GM12878 (cell line): ENCODE measurements at regions of chr20 and their contacts with region 1.

Region 1: GRCh38 chr20:50929299-50930138 is 1.7 kb downstream of the ADNP start:
- DNase-seq: peak; percentile 88
- ATAC-seq: peak; percentile 83
- H3K4me3 ChIP-seq: peak overlapping the region; percentile 94
- H3K27ac ChIP-seq: peak overlapping the region; percentile 70
- H3K4me1 ChIP-seq: peaks cover 5% of the 10 kb centered on the region; the same call in 1 of the 2 replicates
- H3K27me3 ChIP-seq: no peaks in the 10 kb centered on the region
- CTCF ChIP-seq: peak; percentile 98 to 100 (median 100); a peak in 5 of 6 replicates
- EP300 ChIP-seq: peak; percentile 15 to 74; a peak in 1 of 4 replicates
- POLR2A ChIP-seq: peak; percentile 64
- RAD21 ChIP-seq: peak; percentile 86

Region 2: GRCh38 chr20:50772420-50773185 is 156.9 kb before region 1 on chr20:
- CTCF ChIA-PET with region 1: no interaction called
- POLR2A ChIA-PET with region 1: no interaction called
- RAD21 ChIA-PET with region 1: no interaction called
- SMC1A ChIA-PET with region 1: no interaction called
- in situ Hi-C with region 1: no loop called
- intact Hi-C with region 1: no loop called
- DNase-seq: no peak
- ATAC-seq: no peak
- H3K4me3 ChIP-seq: no peak overlapping the region
- H3K27ac ChIP-seq: no peak overlapping the region
- H3K4me1 ChIP-seq: no peaks in the 10 kb centered on the region
- H3K27me3 ChIP-seq: no peaks in the 10 kb centered on the region
- CTCF ChIP-seq: no peak
- EP300 ChIP-seq: no peak
- POLR2A ChIP-seq: no peak
- RAD21 ChIP-seq: no peak

Region 3: DNA sequence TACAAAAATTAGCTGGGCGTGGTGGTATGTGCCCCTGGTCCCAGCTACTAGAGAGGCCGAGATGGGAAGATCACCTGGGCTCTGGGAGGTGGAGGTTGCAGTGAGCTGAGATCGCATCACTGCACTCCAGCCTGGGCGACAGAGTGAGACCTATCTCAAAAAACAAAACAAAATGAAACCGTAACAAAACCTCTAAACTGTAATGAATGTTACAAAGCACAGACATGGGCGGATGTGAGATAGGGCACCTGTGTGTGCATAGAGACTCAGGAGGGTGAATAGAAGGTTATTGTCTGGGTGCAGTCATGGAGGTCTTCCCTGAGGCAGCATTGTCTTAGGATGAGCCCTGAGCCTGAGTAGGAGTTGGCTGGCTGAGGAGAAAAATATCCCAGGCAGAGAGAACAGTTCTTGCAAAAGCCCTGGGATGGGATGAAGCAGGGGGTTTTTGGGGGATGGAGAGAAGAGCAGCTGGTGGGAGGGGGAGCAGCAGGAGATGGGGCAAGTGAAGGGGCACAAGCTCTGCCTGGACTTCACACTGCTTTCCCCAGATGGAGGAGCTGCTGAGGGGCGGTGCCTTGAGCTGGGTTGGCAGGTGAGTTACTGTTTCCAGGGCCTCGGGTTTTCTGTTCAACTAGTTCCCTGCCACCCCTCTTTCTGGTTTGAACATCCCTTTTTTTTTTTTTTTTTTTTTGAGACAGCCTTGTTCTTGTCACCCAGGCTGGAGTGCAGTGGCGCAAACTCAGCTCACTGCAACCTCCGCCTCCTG is 129.4 kb before region 1 on chr20:
- CTCF ChIA-PET with region 1: interaction called, 336 read pairs
- POLR2A ChIA-PET with region 1: interaction called, 67 read pairs
- RAD21 ChIA-PET with region 1: interaction called, 125 read pairs
- SMC1A ChIA-PET with region 1: interaction called, 90 read pairs
- in situ Hi-C with region 1: no loop called
- intact Hi-C with region 1: no loop called
- DNase-seq: no peak
- ATAC-seq: peak; percentile 64
- H3K4me3 ChIP-seq: peak overlapping the region; percentile 63
- H3K27ac ChIP-seq: peak overlapping the region; percentile 95
- H3K4me1 ChIP-seq: peaks cover 29% of the 10 kb centered on the region
- H3K27me3 ChIP-seq: no peaks in the 10 kb centered on the region
- CTCF ChIP-seq: no peak
- EP300 ChIP-seq: no peak
- POLR2A ChIP-seq: no peak
- RAD21 ChIP-seq: no peak

Region 4: GRCh38 chr20:50824193-50824632 is 105.3 kb before region 1 on chr20:
- CTCF ChIA-PET with region 1: interaction called, 78 read pairs
- POLR2A ChIA-PET with region 1: interaction called, 17 read pairs
- RAD21 ChIA-PET with region 1: interaction called, 33 read pairs
- SMC1A ChIA-PET with region 1: interaction called, 20 read pairs
- in situ Hi-C with region 1: no loop called
- intact Hi-C with region 1: no loop called
- DNase-seq: no peak
- ATAC-seq: no peak
- H3K4me3 ChIP-seq: no peak overlapping the region
- H3K27ac ChIP-seq: no peak overlapping the region
- H3K4me1 ChIP-seq: peaks cover 35% of the 10 kb centered on the region
- H3K27me3 ChIP-seq: no peaks in the 10 kb centered on the region
- CTCF ChIP-seq: no peak
- EP300 ChIP-seq: no peak
- POLR2A ChIP-seq: no peak
- RAD21 ChIP-seq: no peak

Region 5: DNA sequence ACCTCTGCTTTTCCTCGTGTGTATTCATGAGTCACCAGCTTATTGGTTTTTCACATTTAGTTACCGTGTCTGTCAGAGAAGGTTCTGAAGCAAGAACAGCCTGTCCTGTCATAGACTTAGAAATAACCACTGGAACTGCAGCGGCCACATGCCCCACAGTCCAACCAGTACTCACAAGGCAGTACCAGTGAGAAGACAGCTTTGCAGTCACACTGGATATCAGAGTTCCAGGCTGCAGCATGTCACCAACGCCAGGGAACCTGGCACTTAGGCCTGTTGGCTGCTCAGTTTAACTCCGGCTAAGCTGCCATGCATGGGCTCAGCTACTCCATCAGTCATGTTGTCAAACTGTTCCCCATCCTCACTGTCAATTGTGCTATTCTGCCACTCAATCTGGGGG is 38.4 kb before region 1 on chr20:
- CTCF ChIA-PET with region 1: interaction called, 20 read pairs
- POLR2A ChIA-PET with region 1: interaction called, 3 read pairs
- RAD21 ChIA-PET with region 1: interaction called, 5 read pairs
- SMC1A ChIA-PET with region 1: interaction called, 6 read pairs
- in situ Hi-C with region 1: no loop called
- intact Hi-C with region 1: no loop called
- DNase-seq: no peak
- ATAC-seq: no peak; the same call in 2 of the 3 replicates
- H3K4me3 ChIP-seq: no peak overlapping the region
- H3K27ac ChIP-seq: no peak overlapping the region
- H3K4me1 ChIP-seq: no peaks in the 10 kb centered on the region
- H3K27me3 ChIP-seq: no peaks in the 10 kb centered on the region
- CTCF ChIP-seq: no peak
- EP300 ChIP-seq: no peak
- POLR2A ChIP-seq: peak; percentile 77
- RAD21 ChIP-seq: no peak

Region 6: GRCh38 chr20:50913690-50914375 is 15.7 kb before region 1 on chr20:
- CTCF ChIA-PET with region 1: interaction called, 91 read pairs
- POLR2A ChIA-PET with region 1: interaction called, 26 read pairs
- RAD21 ChIA-PET with region 1: interaction called, 22 read pairs
- SMC1A ChIA-PET with region 1: interaction called, 54 read pairs
- in situ Hi-C with region 1: no loop called
- intact Hi-C with region 1: no loop called
- DNase-seq: no peak
- ATAC-seq: peak; percentile 56
- H3K4me3 ChIP-seq: no peak overlapping the region
- H3K27ac ChIP-seq: no peak overlapping the region
- H3K4me1 ChIP-seq: peaks cover 76% of the 10 kb centered on the region
- H3K27me3 ChIP-seq: no peaks in the 10 kb centered on the region
- CTCF ChIP-seq: no peak
- EP300 ChIP-seq: no peak
- POLR2A ChIP-seq: no peak
- RAD21 ChIP-seq: no peak